AG04449 (cell line): ENCODE measurements at regions of chr20 and their contacts with region 1.

Region 1: DNA sequence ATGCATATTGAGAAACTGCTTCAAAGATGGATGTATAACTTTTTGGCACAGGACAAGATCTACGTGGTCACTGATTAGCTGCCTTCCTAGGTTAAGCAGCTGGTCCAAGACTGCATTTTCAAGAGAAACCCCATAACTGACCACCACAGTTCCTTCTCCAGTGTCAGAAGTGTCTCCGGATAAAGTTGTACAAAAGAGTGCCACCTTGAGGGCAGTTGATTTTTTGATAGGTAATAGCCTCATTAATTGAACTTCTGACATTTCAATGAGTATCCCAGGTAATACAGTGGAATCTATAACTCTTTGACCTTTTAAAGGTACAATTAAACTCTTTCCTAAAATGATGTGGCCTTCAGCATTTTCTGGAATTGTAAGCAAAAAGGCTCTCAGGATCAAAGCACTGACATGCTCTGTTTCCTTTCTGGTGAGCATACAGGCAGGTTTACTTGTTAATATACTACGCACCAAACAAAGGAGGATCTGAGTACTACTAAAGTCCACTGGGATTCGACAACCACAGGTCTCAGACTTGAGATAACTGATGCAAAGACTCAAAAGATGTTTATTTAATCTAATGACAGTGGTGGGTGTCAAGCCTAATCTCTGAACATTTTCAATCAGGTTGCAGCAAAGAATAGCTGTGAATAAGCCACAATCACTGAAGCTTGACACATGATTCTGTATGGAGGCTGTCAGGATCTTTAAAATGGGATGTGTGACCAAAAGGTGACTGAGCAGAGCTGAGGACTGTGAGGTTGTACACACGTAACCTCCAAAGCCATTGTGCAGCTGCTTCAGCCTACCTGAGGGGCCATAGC is 21.2 kb downstream of the MKKS start:
- DNase-seq: no peak
- H3K4me3 ChIP-seq: no peak overlapping the region
- CTCF ChIP-seq: no peak

Region 2: GRCh38 chr20:10427060-10427692 is 14.4 kb after region 1 on chr20:
- CTCF ChIA-PET with region 1: interaction called, 48 read pairs
- POLR2A ChIA-PET with region 1: no interaction called
- DNase-seq: no peak
- H3K4me3 ChIP-seq: no peak overlapping the region
- CTCF ChIP-seq: peak; percentile 68